ENCODE measurements at regions of chr18 and their contacts with region 1.

Region 1: DNA sequence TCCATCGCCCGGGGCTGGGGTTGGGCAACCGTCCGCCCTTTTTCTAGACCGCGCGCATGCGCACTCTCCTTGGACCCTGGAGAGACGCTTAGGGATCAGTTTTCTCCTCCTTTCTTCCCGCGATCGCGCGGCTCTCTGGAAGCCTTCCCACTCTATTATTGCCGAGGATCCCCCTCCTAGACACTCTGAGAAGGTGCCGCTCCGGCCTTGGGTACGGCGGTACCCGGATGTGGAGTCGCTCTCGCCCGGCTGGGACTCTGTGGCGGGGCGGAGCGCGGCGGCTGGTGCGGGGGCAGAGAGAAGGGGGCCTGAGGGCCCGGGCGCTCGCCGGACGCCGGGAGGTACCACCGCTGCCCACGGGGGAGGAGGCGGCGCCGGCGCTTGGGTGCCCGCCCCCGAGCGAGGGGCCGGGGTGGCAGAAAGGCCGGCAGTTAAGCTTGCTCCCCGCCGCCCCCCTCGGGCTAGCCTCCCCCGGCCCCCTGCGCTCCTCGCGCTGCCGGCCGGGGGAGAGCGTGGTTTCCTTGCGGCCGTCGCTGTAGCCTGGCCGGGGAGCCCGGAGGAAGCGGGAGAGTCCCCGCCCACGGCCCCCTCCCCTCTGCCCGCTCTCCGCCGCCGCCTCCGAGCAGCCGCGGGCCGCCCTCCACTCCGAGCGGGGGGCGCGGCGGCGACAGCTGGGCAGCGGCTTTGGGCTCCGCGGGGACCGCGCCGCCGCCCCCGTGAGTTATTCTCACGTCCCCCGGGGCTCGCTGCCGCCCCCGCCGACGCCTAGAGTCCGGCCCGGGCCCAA is at the start of gene MIB1:
- DNase-seq: peak in 7 of 10 donors; percentile 35 to 93 (median 42)

Region 2: GRCh38 chr18:21600526-21601410 is 140.1 kb before region 1 on chr18 and contains the start of gene ESCO1:
- intact Hi-C with region 1: loop called (anchors 2 kb)
- DNase-seq: peak; percentile 83 to 99 (median 89)

Region 3: GRCh38 chr18:21632393-21632792 is 108.5 kb before region 1 on chr18:
- intact Hi-C with region 1: loop called (anchors 5 kb)
- DNase-seq: no peak

Region 4: DNA sequence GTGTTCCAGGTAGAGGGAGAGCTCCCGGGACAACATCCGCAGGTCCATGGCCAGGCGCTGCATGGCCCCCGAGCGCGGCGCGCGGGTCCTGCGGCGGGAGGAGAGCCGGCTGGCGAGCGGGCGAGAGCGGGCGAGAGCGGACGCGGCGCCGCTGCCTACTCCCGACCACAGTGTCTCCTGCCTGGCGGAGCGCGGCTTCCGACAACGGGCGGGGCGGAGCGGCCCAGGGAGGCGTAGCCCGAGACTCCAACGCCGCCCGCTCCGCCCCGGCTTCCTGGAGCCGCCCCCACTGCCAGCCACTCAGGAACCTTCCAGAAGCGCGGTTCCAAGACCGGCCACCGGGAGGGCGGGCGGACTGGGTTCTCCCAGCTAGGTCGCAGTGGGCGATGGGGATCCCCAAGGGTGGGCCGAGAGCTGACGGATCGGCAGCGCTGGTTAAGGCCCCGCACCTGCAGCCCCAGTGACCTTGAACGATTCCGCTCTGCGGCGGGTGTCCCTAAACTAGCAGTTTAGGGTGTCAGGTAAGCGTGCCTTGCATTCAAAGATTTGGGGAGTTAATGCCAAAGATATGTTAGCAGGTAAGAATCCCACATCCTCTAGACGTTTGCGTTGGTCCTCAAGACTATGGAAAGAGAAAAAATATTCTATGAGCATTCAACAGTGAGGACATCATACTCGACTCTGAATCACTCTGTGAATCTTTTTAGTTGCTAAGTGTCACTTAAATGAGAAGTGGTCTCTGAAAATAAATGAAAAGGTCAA is 36.1 kb before region 1 on chr18 and contains the start of gene ABHD3:
- intact Hi-C with region 1: loop called (anchors 2 kb)
- DNase-seq: peak; percentile 83 to 98 (median 90)

Region 5: GRCh38 chr18:21820035-21820810 is 79.3 kb after region 1 on chr18:
- intact Hi-C with region 1: loop called (anchors 10 kb)
- DNase-seq: no peak

Measured in posterior cingulate gyrus (tissue), 11 donors.